Naive thymus-derived CD8-positive, alpha-beta T cell (primary cell): ENCODE measurements at regions of chr7 and their contacts with region 1.

Region 1: DNA sequence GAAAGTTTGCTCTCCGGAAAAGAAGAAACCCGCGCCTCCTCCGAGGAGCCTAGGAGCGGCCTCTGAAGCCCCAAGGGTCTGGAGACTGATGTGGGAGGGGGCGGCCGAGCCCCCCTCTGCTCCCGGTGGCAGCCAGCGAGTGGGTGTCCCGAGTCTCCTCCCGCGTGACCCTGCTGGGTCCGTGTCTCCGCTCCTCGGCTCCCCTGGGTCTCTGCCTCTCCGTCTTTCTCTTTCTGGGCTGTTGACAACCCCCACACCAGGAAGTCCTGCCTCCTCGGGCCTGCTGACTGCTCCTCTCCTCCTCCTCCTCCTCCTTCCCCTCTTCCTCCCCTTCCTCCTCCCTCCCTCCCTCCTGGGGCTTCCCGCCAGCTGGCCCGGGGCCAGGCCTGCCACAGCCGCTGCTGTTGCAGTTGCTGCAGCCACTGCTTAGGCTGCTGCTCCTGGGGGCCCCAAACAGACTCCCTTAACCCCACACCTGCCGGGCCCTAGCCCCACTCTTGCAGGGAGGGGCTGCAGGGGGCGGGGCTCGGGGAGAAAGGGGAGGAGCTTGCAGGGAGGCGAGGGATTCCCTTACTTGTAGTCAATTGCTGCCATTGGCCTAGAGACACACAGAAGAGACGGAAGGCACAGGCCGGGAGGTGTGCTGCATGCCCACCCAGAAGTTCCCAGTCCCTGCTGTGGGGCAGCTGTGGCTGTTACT is at the start of gene TSC22D4:
- DNase-seq: peak; percentile 85 to 98 (median 95)
- ATAC-seq: peak; percentile 74 to 76
- H3K4me3 Mint-ChIP-seq: peak within 1 kb of the TSS; percentile 88 to 100 (median 93)
- H3K27ac Mint-ChIP-seq: peak within 1 kb of the TSS; percentile 78 to 96 (median 88)
- H3K4me1 Mint-ChIP-seq: peaks cover 15 to 51% (median 48%) of the 10 kb centered on the region in 4 donors
- H3K27me3 Mint-ChIP-seq: no peaks in the 10 kb centered on the region
- polyA plus RNA-seq, gene TSC22D4: 30.3 to 35.9 (median 31.0) TPM

Region 2: DNA sequence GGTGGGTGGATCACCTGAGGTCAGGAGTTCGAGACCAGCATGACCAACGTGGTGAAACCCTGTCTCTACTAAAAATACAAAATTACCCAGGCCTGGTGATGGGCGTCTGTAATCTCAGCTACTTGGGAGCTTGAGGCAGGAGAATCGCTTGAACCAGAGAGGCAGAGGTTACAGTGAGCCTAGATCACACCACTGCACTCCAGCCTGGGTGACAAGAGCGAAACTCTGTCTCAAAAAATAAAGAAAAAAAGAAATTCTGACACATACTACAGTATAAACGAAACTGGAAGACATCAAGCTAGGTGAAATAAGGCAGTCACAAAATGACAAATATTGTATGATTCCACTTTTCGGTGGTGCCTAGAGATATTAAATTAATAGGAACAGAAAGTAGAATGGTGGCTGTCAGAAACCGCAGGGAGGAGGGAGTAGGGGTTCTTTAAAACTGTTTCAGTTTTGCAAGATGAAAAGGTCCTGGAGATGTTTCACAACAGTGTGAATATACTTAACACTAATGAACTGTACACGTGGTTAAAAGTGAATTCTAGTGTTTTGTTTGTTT is 82.6 kb before region 1 on chr7:
- POLR2A ChIA-PET with region 1: no interaction called
- DNase-seq: peak in 3 of 10 donors; percentile 35 to 39 (median 39)
- ATAC-seq: peak; percentile 75 to 83
- H3K4me3 Mint-ChIP-seq: peak overlapping the region; percentile 14 to 79 (median 46)
- H3K27ac Mint-ChIP-seq: peak overlapping the region; percentile 53 to 91 (median 78)
- H3K4me1 Mint-ChIP-seq: peaks cover 5 to 36% (median 15%) of the 10 kb centered on the region in 4 donors
- H3K27me3 Mint-ChIP-seq: peaks cover 0 to 2% (median 0%) of the 10 kb centered on the region in 5 donors

Region 3: GRCh38 chr7:100435401-100436304 is 43.5 kb before region 1 on chr7:
- POLR2A ChIA-PET with region 1: interaction called, 31 read pairs
- DNase-seq: peak in 9 of 10 donors; percentile 25 to 69 (median 49)
- ATAC-seq: peak; percentile 34 to 50
- H3K4me3 Mint-ChIP-seq: peak overlapping the region; percentile 85 to 97 (median 94)
- H3K27ac Mint-ChIP-seq: peak overlapping the region; percentile 84 to 98 (median 96)
- H3K4me1 Mint-ChIP-seq: peaks cover 18 to 50% (median 48%) of the 10 kb centered on the region in 4 donors
- H3K27me3 Mint-ChIP-seq: no peaks in the 10 kb centered on the region

Region 4: DNA sequence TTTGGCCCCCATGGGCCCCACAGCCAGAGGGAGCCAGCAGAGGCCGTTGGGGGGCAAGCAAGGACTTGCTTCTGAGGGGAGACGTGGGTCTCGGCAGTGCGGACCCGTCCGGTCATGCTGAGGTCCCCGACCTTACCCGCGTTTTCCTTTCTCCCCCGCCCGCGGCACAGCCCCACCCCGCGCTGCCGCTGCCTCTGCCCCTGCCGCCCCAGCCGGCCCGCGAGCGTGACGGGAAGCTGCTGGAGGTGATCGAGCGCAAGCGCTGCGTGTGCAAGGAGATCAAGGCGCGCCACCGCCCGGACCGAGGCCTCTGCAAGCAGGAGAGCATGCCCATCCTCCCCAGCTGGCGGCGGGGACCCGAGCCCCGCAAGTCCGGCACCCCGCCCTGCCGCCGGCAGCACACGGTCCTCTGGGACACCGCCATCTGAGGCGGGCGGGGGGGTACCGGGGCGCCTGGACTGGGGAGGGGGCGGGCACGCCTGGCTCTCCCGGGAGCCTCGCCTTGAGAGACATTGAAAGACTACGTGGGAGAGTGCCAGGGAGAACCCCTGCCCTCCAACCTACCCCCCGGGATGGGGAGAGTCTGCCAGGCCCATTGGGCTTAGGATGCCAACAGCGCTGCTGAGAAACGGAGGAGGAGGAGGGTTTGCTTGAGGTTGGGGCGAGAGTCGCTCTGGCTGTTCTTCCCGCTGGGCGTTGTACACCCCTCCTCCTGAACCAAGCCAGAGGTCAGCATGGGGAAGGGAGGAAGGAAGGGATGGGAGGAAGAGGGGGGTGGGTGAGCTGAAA is 14.6 kb after region 1 on chr7:
- POLR2A ChIA-PET with region 1: interaction called, 14 read pairs
- DNase-seq: peak; percentile 34 to 74 (median 54)
- ATAC-seq: peak; percentile 93 to 97
- H3K4me3 Mint-ChIP-seq: peak overlapping the region; percentile 47 to 87 (median 77)
- H3K27ac Mint-ChIP-seq: peak overlapping the region in 7 of 10 donors; percentile 31 to 82 (median 70)
- H3K4me1 Mint-ChIP-seq: peaks cover 7 to 36% (median 16%) of the 10 kb centered on the region in 4 donors
- H3K27me3 Mint-ChIP-seq: peaks cover 0 to 12% (median 0%) of the 10 kb centered on the region in 5 donors

Region 5: DNA sequence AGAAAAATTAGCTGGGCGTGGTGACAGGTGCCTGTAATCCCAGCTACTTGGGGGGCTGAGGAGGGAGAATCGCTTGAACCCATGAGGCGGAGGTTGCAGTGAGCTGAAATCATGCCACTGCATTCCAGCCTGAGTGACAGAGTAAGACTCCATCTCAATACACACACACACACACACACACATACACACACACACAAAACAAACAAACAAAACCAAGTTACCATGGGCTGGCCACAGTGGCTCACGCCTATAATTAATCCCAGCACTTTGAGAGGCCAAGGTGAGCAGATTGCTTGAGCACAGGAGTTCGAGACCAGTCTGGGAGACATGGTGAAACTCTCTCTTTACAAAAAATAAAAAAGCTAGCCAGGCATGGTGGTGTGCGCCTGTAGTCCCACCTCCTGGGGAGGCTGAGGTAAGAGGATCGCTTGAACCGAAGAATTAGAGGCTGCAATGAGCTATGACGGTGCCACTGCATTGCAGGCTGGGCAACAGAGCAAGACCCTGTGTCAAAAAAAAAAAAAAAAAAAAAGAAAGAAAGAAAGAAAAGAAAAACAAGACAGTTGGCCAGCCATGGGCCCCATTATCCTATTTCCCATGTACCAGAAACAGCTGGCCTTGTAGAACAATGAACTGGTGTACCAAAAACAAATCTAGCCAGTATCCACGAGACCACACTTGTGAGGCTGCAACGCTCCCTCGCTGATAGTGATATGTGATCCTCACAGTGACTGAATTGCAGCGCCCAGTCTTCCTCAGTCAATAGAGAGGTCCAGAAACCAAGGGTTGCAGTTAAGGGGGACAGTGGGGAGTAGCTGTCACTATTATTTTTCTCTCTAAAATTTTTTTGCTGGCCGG is 53.3 kb after region 1 on chr7:
- POLR2A ChIA-PET with region 1: no interaction called
- DNase-seq: no peak
- ATAC-seq: no peak
- H3K4me3 Mint-ChIP-seq: no peak overlapping the region
- H3K27ac Mint-ChIP-seq: no peak overlapping the region
- H3K4me1 Mint-ChIP-seq: peaks cover 0 to 1% (median 0%) of the 10 kb centered on the region in 4 donors
- H3K27me3 Mint-ChIP-seq: peaks cover 0 to 1% (median 0%) of the 10 kb centered on the region in 5 donors

Region 6: GRCh38 chr7:100545360-100546128 is 66.4 kb after region 1 on chr7:
- POLR2A ChIA-PET with region 1: interaction called, 16 read pairs
- DNase-seq: peak in 3 of 10 donors; percentile 18 to 24 (median 20)
- ATAC-seq: peak; percentile 67 to 71
- H3K4me3 Mint-ChIP-seq: peak overlapping the region; percentile 36 to 88 (median 75)
- H3K27ac Mint-ChIP-seq: peak overlapping the region; percentile 81 to 96 (median 92)
- H3K4me1 Mint-ChIP-seq: peaks cover 52 to 99% (median 93%) of the 10 kb centered on the region in 4 donors
- H3K27me3 Mint-ChIP-seq: no peaks in the 10 kb centered on the region

Region 7: DNA sequence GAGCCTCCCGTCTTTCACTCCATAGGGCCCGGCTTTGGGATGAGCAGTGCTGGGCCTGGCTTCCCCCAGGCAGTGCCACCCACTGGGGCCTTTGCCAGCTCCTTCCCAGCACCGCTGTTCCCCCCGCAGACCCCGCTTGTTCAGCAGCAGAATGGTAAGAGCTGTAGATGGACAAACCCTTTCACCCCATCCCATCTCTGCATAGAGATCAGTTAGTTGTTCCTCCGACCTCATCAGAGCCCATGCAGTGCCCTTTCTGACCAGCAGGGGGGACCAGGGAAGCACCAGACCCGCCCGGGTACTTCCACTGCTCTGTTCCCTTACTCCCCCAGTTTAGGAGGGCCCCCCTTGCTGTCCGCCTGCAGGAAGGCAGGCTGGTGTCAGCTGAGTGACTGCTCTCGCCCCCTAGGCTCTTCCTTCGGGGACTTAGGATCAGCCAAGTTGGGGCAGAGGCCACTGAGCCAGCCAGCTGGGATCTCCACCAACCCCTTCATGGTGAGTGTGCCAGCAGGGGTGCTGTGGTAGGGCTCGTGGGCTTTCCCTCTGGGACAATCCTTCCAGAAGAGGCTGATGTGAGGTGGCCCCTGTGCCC is 84.8 kb after region 1 on chr7:
- POLR2A ChIA-PET with region 1: interaction called, 10 read pairs
- DNase-seq: peak; percentile 66 to 91 (median 83)
- ATAC-seq: peak; percentile 75 to 78
- H3K4me3 Mint-ChIP-seq: peak overlapping the region in 1 of 10 donors; percentile 24
- H3K27ac Mint-ChIP-seq: peak overlapping the region in 8 of 10 donors; percentile 0 to 78 (median 60)
- H3K4me1 Mint-ChIP-seq: peaks cover 16 to 41% (median 36%) of the 10 kb centered on the region in 4 donors
- H3K27me3 Mint-ChIP-seq: no peaks in the 10 kb centered on the region